Left cardiac atrium (tissue), 4 donors: ENCODE measurements at regions of chr20 and their contacts with region 1.

Region 1: DNA sequence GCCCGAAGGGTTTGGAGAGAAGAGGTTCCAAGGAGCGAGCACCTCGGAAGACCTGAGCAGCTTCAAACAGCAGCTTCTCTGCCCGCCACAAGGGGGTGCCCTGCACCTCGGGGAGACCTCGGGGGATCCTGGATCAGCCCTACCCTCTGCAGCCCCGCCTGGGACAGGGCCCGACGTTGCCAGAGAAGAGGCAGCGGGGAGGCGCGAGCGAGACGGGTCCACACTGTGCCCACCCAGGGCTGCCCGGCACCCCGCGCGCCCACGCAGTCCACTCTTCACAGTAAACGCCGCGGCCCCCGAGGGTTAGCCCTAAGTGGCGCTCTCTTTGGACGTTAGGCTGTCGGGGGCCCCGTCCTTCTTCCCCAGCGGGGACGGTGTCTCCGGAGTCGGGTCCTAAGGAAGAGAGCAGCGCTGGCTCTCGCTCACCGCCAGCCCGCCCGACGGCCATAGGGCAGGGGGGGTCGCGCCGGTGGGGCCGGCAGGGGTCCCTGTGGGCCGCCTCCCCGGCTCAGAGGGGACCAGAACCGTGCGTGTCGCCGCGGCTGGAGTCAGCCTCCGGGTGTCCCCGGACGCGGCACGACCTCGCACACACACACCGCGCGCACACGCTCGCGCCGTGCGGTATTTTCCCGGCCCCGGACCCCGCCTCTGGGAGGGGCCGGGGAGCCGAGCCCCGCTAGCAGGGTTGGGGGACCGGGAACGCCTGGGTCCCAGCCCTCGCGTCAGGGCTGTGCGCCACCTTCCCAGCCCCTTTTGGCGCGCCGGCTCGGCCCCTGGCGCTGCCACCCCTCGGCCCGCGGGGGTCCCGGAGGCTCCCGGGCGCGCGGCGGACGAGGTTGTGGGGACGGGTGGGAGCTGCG is 929 bp downstream of the CDH22 start:
- DNase-seq: peak; percentile 51
- ATAC-seq: peak; percentile 60 to 69

Region 2: GRCh38 chr20:45735552-45735951 is 571.8 kb before region 1 on chr20:
- intact Hi-C with region 1: no loop called
- DNase-seq: no peak
- ATAC-seq: no peak

Region 3: GRCh38 chr20:46132705-46133120 is 174.7 kb before region 1 on chr20:
- intact Hi-C with region 1: loop called in 1 of 2 experiments (anchors 2 kb)
- DNase-seq: peak; percentile 77
- ATAC-seq: peak; percentile 89 to 92

Region 4: DNA sequence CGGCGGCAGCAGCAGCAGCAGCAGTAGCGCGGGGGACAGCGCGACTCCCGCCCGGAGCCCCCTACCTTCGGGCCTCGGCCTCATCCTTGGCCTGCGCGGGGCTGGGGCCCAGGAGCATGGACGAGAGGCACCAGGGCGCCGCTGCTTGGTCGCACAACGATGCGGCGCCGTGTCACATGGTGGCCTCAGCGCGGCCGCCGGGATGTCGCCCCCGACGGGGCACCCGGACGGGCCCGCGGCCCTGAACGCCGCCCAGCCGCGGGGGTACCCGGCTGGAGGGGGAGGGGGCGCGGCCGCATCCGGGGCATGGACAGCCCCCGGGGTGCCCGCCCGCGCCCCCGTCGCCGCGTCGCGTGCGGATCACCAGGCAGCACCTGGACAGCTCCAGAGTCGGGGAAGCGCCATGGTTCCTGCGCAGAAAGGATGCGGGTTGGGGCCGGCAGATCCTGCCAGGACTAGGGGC is 56.1 kb before region 1 on chr20:
- intact Hi-C with region 1: loop called in 1 of 2 experiments (anchors 2 kb)
- DNase-seq: no peak
- ATAC-seq: no peak

Region 5: GRCh38 chr20:46388201-46388836 is 81.0 kb after region 1 on chr20:
- intact Hi-C with region 1: no loop called
- DNase-seq: no peak
- ATAC-seq: no peak

Region 6: GRCh38 chr20:46411637-46412036 is 104.3 kb after region 1 on chr20:
- intact Hi-C with region 1: loop called in 1 of 2 experiments (anchors 2 kb)
- DNase-seq: no peak
- ATAC-seq: no peak